Common myeloid progenitor, CD34-positive (primary cell): ENCODE measurements at regions of chr13 and their contacts with region 1.

Region 1: DNA sequence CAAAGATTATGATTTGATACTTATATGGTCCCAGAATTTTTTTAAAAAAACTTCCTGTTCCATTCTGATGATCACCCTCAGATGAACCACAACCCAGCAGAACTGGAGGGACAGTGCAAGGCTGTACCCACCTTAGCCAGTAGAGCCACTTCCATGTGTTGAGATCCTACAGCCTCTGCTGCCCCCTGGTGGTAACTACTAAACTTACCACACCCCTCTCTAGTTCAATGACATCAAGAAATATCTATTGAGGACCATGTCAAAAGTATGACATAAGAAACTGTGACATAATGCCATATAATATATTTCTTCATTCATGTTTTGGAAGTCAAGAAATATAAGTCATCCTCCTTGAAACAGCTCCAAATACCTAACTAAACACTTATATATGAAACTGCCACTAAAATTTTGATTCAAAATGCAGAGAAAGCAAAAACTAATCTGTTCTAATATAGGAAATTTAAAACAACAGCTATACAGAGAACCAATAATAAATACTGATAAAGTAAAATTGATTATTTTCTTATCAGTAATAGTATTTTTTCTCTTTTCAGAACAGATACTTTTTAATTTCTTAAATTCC is 412.6 kb downstream of the KCTD12 start:
- DNase-seq: peak; percentile 89 to 96 (median 92)
- H3K4me3 ChIP-seq: no peak overlapping the region
- H3K27ac ChIP-seq: no peak overlapping the region
- H3K4me1 ChIP-seq: no peaks in the 10 kb centered on the region
- H3K27me3 ChIP-seq: no peaks in the 10 kb centered on the region

Region 2: GRCh38 chr13:75876360-75877050 is 597.1 kb before region 1 on chr13:
- CTCF ChIA-PET with region 1: interaction called, 160 read pairs
- POLR2A ChIA-PET with region 1: no interaction called
- DNase-seq: peak; percentile 72 to 83 (median 80)
- H3K4me3 ChIP-seq: peak overlapping the region in 1 of 7 experiments; percentile 31
- H3K27ac ChIP-seq: no peak overlapping the region
- H3K4me1 ChIP-seq: peaks cover 0 to 15% (median 3%) of the 10 kb centered on the region in 4 experiments
- H3K27me3 ChIP-seq: no peaks in the 10 kb centered on the region

Region 3: GRCh38 chr13:76461999-76462398 is 11.6 kb before region 1 on chr13:
- CTCF ChIA-PET with region 1: interaction called, 12 read pairs
- POLR2A ChIA-PET with region 1: no interaction called
- DNase-seq: peak in 2 of 3 donors; percentile 18 to 43
- H3K4me3 ChIP-seq: no peak overlapping the region
- H3K27ac ChIP-seq: no peak overlapping the region
- H3K4me1 ChIP-seq: peaks cover 0 to 26% (median 8%) of the 10 kb centered on the region in 4 experiments
- H3K27me3 ChIP-seq: no peaks in the 10 kb centered on the region